ENCODE measurements at regions of chr4 and their contacts with region 1.

Region 1: DNA sequence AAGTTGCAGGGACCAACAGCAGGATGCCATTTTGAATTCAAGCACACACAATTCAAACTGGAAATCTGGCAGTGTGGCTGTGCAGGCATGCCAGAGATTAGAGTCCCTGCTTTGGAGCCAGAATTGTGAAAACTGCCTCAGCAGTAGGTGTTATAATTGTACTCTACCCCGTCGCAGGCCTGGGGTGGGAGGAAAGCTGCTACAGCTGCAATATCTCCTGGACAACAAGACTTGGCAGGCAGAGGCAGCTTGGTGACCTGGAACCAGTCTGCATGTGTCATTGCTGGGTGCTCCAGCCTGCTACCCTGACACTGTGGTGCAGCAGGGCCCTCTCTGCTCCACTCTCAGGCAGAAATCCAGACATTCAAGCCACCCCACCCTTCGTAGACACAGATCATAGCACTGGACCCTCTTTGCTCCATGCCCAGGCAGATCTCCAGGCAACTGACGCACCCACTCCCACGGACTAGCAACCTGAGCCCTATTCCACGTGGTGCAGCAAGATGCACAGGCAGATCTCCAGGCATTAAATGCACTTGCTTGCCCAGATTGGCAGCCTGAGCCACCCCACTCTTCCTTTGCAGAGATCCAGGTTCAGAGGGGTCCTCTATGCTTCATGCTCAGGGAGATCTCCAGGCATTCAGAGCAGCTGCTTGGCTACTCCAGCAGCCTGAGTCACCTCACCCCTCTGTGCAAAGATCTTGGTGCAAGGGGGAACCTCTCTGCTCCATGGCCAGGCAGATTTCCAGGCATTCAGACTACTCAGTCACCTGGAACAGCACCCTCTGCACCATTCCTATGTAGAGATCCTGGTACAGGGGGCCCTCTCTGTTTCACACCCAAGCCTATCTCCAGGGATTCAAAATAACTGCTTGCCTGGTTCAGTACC is 140.5 kb downstream of the LRBA start:
- DNase-seq: no peak
- ATAC-seq: peak; percentile 46
- H3K4me3 ChIP-seq: no peak overlapping the region
- H3K27ac ChIP-seq: no peak overlapping the region
- H3K4me1 ChIP-seq: no peaks in the 10 kb centered on the region
- H3K27me3 ChIP-seq: no peaks in the 10 kb centered on the region
- CTCF ChIP-seq: no peak
- EP300 ChIP-seq: no peak
- POLR2A ChIP-seq: no peak
- RAD21 ChIP-seq: no peak

Region 2: GRCh38 chr4:150010525-150011126 is 864.0 kb before region 1 on chr4:
- CTCF ChIA-PET with region 1: no interaction called
- POLR2A ChIA-PET with region 1: no interaction called
- in situ Hi-C with region 1: loop called (anchors 25 kb)
- intact Hi-C with region 1: loop called (anchors 10 kb)
- DNase-seq: peak; percentile 12 to 41 (median 18)
- ATAC-seq: peak; percentile 87
- H3K4me3 ChIP-seq: no peak overlapping the region
- H3K27ac ChIP-seq: no peak overlapping the region
- H3K4me1 ChIP-seq: no peaks in the 10 kb centered on the region
- H3K27me3 ChIP-seq: no peaks in the 10 kb centered on the region
- CTCF ChIP-seq: peak; percentile 28 to 49 (median 47); a peak in 4 of 6 replicates
- EP300 ChIP-seq: no peak
- POLR2A ChIP-seq: no peak
- RAD21 ChIP-seq: peak in 1 of 2 experiments; percentile 43; a peak in 2 of 4 replicates

Region 3: DNA sequence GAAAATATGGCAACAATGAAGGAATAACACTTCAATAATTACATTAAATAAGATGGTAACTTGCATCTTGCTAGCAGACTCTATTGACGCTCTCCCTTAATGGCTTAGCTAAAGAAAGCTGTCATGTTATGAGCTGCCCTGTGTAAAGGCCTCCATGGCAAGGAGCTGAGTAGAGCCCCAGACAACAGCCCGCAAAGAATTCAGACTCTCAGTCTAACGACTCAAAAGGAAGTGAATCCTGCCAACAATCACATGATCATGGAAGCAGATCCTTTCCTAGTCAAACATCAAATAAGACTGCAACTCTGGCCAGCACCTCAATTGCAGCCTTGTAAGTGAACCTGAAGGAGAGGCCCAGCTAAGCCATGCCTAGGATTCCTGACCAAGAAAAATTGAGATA is 135.0 kb before region 1 on chr4:
- CTCF ChIA-PET with region 1: no interaction called
- POLR2A ChIA-PET with region 1: no interaction called
- in situ Hi-C with region 1: no loop called
- intact Hi-C with region 1: no loop called
- DNase-seq: no peak
- ATAC-seq: peak; percentile 52
- H3K4me3 ChIP-seq: no peak overlapping the region
- H3K27ac ChIP-seq: no peak overlapping the region
- H3K4me1 ChIP-seq: no peaks in the 10 kb centered on the region
- H3K27me3 ChIP-seq: no peaks in the 10 kb centered on the region
- CTCF ChIP-seq: no peak
- EP300 ChIP-seq: no peak
- POLR2A ChIP-seq: no peak
- RAD21 ChIP-seq: no peak

Region 4: GRCh38 chr4:151045907-151046306 is 171.3 kb after region 1 on chr4:
- CTCF ChIA-PET with region 1: no interaction called
- POLR2A ChIA-PET with region 1: no interaction called
- in situ Hi-C with region 1: no loop called
- intact Hi-C with region 1: loop called (anchors 5 kb)
- DNase-seq: peak; percentile 26 to 58 (median 40)
- ATAC-seq: peak; percentile 93
- H3K4me3 ChIP-seq: no peak overlapping the region
- H3K27ac ChIP-seq: no peak overlapping the region
- H3K4me1 ChIP-seq: no peaks in the 10 kb centered on the region; a peak in 1 of 5 replicates
- H3K27me3 ChIP-seq: no peaks in the 10 kb centered on the region
- CTCF ChIP-seq: peak; percentile 49 to 66 (median 55); a peak in 4 of 6 replicates
- EP300 ChIP-seq: no peak
- POLR2A ChIP-seq: no peak
- RAD21 ChIP-seq: peak in 1 of 2 experiments; percentile 66; a peak in 3 of 4 replicates

Region 5: DNA sequence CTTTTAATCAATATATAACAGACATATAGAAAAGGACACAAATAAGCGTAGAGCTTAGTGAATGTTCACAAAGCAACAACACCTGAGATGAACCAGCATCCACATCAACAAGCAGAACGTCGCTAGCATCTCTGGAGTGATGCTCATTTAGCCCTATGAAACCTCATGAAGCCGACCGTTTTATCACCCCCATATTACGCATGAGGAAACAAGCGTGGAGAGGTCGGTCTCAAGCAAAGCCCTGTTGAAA is 224.3 kb after region 1 on chr4:
- CTCF ChIA-PET with region 1: no interaction called
- POLR2A ChIA-PET with region 1: no interaction called
- in situ Hi-C with region 1: no loop called
- intact Hi-C with region 1: no loop called
- DNase-seq: no peak
- ATAC-seq: no peak; the same call in 2 of the 3 replicates
- H3K4me3 ChIP-seq: peak overlapping the region; percentile 85
- H3K27ac ChIP-seq: peak overlapping the region; percentile 62
- H3K4me1 ChIP-seq: peaks cover 7 to 8% of the 10 kb centered on the region in 2 experiments; a peak in 3 of 5 replicates
- H3K27me3 ChIP-seq: no peaks in the 10 kb centered on the region
- CTCF ChIP-seq: no peak
- EP300 ChIP-seq: no peak
- POLR2A ChIP-seq: no peak
- RAD21 ChIP-seq: no peak